H1 (cell line): ENCODE measurements at regions of chr3 and their contacts with region 1.

Region 1: DNA sequence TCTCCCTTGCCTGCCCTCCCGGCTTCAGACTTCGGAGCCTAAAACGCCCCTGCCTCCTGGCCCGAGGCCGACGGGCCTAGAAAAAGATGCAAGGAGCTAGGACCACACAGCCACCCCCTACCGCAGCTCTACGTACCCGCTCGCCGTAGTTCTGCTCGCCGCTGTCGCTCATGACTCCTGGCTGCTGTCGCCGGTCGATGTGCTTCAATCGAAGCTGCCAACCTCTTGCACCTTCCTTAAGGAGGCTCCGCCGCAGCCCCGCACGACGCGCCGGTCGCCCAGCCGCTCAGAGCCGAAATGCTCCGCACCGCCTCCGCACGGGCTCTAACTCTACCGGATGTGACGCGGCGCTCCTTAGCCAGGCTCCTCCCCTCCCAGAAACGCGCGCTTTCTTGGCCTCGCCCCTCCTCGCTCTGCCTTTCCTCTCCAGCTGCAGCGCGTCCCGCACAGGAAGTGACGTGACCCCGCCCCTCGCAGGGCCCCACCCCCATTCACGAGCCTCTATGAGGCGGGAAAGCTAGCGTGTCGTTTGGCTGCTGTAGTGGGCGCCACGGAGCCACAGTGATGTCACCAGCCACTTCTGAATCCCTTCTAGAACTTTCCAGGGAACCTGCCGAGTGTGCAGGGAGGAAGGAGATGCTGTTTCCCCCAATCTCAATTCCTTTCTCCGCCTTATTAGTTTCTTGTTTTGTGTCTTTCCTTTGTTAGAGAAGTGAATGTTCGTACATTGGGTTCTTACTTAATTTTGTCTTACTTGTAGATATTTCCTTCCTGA is at the start of gene TRA2B:
- DNase-seq: peak; percentile 96 to 98
- H3K4me3 ChIP-seq: peak within 1 kb of the TSS; percentile 83 to 100 (median 96)
- H3K27ac ChIP-seq: peak within 1 kb of the TSS; percentile 100
- H3K4me1 ChIP-seq: peaks cover 0 to 4% (median 0%) of the 10 kb centered on the region in 4 experiments; a peak in 1 of 7 replicates
- H3K27me3 ChIP-seq: no peaks in the 10 kb centered on the region
- CTCF ChIP-seq: peak; percentile 5 to 41 (median 35); a peak in 2 of 4 replicates
- EP300 ChIP-seq: peak in 1 of 2 experiments; percentile 64; a peak in 1 of 3 replicates
- POLR2A ChIP-seq: peak; percentile 98 to 99
- RAD21 ChIP-seq: no peak
- total RNA-seq, gene TRA2B: 267 and 274 TPM in 2 replicates

Region 2: DNA sequence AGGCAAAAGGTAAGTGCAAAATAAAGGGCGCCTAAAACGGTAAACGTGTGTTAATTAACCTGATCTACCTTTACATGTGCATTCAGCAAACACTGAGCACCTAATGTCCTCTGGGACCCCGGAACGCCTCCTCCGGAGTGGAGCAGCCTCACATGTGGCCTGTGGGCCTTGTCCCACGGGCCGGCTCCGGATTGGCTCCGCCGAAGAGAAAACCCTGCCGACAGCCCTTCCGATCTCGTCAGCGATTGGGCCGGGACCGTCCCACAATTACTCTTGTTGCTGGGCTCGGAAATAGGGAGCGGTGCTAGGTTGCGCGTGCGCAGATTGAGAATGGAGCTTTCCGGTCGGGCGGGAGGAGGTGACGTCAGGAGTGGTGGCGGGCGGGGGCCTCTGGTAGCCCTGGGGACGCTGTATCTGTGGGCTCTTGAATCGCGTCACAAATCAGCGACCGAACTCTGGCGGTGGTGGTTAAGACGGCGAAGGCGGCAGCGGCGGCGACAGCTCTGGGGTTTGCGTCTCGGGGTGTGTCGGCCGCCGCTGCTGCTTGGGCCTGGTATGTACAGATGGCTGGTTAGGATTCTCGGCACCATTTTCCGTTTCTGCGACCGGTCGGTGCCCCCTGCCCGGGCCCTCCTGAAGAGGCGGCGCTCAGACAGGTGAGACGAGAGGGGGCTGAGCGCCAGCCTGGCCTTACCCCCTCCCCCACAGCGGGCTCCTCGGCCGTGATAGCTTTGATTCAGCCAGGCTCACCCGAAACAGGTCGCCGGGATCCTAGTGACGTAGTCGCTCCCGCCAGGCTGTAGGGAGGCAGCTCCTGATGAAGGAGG is 351.8 kb before region 1 on chr3 and contains the start of gene SENP2:
- CTCF ChIA-PET with region 1: no interaction called
- POLR2A ChIA-PET with region 1: interaction called, 11 read pairs
- DNase-seq: peak; percentile 97 to 99
- H3K4me3 ChIP-seq: peak within 1 kb of the TSS; percentile 75 to 90 (median 84)
- H3K27ac ChIP-seq: peak within 1 kb of the TSS; percentile 82
- H3K4me1 ChIP-seq: peaks cover 0 to 22% (median 9%) of the 10 kb centered on the region in 4 experiments; a peak in 6 of 7 replicates
- H3K27me3 ChIP-seq: no peaks in the 10 kb centered on the region
- CTCF ChIP-seq: no peak
- EP300 ChIP-seq: no peak
- POLR2A ChIP-seq: peak; percentile 61 to 78
- RAD21 ChIP-seq: 0 out of 4 replicates have a peak, but pooled peaks of 1 of the 2 experiments have one; percentile 1
- total RNA-seq, gene SENP2: 69.3 and 75.5 TPM in 2 replicates

Region 3: DNA sequence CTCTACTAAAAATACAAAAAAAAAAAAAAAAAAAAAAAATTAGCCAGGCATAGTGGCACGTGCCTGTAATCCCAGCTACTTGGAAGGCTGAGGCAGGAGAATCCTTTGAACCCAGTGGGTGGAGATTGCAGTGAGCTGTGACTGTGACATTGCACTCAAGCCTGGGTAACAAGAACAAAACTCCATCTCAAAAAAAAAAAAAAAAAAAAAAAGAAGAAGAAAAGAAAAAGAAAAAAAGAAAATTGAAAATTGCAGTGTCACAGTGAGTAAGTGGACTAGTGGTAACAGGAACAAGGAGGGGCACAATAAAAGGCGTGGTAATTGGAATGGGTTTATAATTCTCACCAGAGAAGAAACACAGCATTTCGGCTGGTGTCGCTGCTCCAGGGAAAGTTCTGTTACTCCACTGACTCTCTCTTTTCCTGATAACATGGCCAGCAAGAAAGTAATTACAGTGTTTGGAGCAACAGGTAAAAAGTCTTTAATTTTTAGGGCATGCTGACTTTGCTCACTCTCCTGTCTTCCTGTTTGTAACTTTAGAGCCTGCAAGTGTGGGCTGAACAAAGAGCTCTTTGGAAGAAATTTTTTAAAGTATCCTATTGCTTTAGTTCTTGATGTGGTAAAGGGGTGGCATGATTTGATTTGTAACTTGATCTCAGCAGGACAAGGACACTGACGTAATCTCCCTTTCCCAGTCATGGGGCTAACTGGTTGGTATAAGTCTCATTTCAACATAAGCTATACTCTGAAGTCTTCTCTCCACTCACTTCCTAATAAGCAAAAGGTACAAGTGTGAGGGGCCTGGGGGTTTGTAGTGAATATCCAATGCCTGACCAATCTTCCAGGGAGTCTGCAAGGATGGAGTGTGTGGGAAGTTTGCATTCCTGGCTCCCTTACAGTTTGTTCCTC is 22.0 kb after region 1 on chr3:
- CTCF ChIA-PET with region 1: interaction called, 62 read pairs
- POLR2A ChIA-PET with region 1: interaction called, 18 read pairs
- DNase-seq: no peak
- H3K4me3 ChIP-seq: no peak overlapping the region
- H3K27ac ChIP-seq: no peak overlapping the region
- H3K4me1 ChIP-seq: peaks cover 0 to 4% (median 0%) of the 10 kb centered on the region in 4 experiments; a peak in 1 of 7 replicates
- H3K27me3 ChIP-seq: no peaks in the 10 kb centered on the region
- CTCF ChIP-seq: no peak
- EP300 ChIP-seq: no peak
- POLR2A ChIP-seq: no peak
- RAD21 ChIP-seq: no peak

Region 4: DNA sequence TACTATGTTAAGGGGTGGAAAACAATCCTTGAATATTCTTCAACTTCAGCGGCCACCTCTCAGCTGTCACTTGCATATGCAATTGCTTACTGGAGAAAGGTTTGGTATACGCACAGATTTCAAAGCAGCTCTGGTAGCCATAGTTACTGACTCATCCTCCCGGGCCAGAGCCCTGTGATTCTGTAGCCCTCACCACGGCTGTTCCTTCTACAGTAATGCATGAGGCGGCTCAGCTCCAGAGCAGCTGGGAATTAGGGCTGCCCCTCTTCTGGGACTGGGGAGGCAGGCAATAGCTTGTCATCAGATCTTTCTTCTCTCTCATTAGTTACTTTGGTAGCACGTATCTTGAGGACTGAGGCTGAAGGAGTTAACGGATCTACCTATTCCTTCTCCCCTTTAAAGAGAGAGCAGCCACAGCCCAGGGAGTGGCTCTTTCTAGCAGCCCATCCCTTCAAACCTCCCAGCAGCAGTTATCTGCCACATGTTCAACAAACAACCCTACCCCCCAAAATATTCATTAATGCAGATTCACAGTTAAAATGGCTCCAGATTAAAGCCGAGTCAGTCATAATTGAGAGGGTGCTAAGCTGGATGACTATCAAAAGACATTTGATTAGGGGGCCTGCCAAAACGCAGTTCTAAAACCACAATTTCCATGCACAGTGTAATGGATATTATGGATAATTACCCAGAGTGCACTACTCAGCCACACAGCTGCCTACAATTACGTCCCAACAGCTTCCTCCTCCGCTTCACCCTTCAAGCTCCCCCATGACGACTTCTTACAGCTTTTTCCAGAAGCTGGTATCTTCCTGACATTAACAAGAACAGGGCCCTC is 116.3 kb after region 1 on chr3:
- CTCF ChIA-PET with region 1: no interaction called
- POLR2A ChIA-PET with region 1: no interaction called
- DNase-seq: no peak
- H3K4me3 ChIP-seq: no peak overlapping the region
- H3K27ac ChIP-seq: no peak overlapping the region
- H3K4me1 ChIP-seq: peaks cover 2 to 11% (median 6%) of the 10 kb centered on the region in 4 experiments; a peak in 6 of 7 replicates
- H3K27me3 ChIP-seq: no peaks in the 10 kb centered on the region
- CTCF ChIP-seq: no peak
- EP300 ChIP-seq: no peak
- POLR2A ChIP-seq: no peak
- RAD21 ChIP-seq: no peak

Region 5: DNA sequence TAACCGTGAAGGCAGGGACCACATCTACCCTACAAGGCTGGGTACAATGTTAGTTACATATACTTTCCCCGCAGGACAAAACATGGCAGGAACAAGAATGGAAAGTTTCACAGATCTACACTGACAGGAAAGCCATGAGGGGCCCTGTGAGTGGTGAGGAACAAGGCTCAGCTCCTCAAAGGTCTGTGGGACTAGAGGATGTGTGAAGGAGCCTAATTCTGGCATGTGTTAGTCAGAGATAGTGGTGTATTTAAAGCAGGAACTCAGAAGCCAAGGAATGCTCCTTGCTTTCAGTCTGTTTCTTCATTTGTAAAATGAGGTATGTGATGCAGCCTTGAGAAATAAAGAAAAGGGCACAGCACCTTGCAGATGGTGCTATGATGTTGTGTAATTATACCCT is 145.9 kb after region 1 on chr3:
- CTCF ChIA-PET with region 1: no interaction called
- POLR2A ChIA-PET with region 1: no interaction called
- DNase-seq: no peak
- H3K4me3 ChIP-seq: no peak overlapping the region
- H3K27ac ChIP-seq: no peak overlapping the region
- H3K4me1 ChIP-seq: peaks cover 4 to 16% (median 16%) of the 10 kb centered on the region in 4 experiments; a peak in 6 of 7 replicates
- H3K27me3 ChIP-seq: no peaks in the 10 kb centered on the region
- CTCF ChIP-seq: no peak
- EP300 ChIP-seq: no peak
- POLR2A ChIP-seq: no peak
- RAD21 ChIP-seq: no peak

Region 6: DNA sequence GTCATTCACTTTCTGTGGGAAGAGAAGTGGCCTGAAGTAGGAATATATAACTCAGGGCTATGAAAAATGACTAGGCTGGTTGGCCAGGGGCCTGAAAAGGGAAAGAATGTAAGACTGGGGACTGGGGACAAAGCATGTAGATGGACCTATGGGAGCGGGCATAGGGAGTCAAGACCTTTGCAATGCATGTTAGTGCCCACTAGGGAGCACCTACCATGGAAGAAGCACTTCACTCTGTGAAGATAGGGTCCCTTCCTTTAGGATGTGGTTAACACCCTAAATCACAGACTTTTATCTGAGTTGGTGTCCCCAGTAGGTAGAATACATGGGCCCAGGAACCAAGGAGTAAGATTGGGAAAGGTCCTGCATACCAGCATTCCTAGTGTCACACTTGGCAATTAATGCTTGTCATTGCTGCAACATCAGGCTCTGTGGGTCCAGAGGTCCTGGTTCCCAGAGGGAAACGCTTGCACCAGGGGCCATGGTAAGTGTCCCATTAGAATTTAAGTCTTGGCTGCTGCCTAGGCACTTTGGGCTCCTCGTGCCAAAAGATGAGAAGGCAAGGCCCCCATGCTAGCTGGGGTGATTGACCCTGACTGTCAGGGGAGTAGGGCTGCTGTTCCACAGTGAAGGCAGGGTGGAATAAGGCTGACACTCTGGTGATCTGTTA is 526.7 kb after region 1 on chr3:
- CTCF ChIA-PET with region 1: no interaction called
- POLR2A ChIA-PET with region 1: no interaction called
- DNase-seq: peak in 1 of 2 experiments; percentile 44
- H3K4me3 ChIP-seq: no peak overlapping the region
- H3K27ac ChIP-seq: no peak overlapping the region
- H3K4me1 ChIP-seq: no peaks in the 10 kb centered on the region
- H3K27me3 ChIP-seq: no peaks in the 10 kb centered on the region
- CTCF ChIP-seq: peak; percentile 38 to 65 (median 44)
- EP300 ChIP-seq: no peak
- POLR2A ChIP-seq: no peak
- RAD21 ChIP-seq: peak; percentile 23 to 50; a peak in 3 of 4 replicates